GM10248 (cell line): ENCODE measurements at regions of chr3 and their contacts with region 1.

Region 1: GRCh38 chr3:184561061-184561912 is at the start of gene EPHB3:
- DNase-seq: peak; percentile 93
- CTCF ChIP-seq: peak; percentile 98

Region 2: DNA sequence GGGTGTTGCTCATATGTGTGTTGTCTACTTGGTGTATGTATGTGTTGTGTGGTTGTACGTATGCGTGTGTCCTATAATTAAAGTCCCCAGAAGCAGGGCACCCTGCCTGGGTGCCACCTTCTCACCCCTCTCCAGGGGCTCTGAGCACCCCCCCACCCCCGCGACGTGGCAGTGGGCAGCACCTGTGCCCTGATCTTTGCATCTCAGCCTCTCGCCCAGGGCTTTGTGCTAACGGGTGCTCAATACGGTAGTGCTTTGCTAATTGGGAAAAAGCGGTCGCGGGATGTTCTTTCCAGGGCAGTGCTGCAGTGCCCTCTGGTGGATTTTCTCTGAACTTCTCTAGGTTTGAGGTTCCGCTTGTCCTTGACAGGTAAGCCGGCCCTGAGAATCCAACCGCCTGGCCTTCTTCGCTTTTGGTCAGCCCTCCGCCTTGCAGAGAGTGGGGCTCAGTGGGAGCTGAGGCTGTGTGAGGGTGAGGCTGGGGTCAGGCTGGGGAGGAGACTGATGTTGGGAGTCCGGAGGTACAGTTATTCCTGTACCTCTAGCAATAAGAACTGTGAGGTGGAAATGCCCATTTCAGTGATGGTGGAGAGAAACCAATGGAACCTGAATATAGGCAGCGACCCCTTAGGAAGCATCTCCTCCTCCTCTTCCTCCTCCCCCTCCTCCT is 17.3 kb before region 1 on chr3:
- CTCF ChIA-PET with region 1: interaction called, 20 read pairs
- POLR2A ChIA-PET with region 1: no interaction called
- DNase-seq: peak; percentile 83
- CTCF ChIP-seq: peak; percentile 72

Region 3: GRCh38 chr3:184574515-184575417 is 13.5 kb after region 1 on chr3:
- CTCF ChIA-PET with region 1: interaction called, 22 read pairs
- POLR2A ChIA-PET with region 1: no interaction called
- DNase-seq: no peak
- CTCF ChIP-seq: no peak

Region 4: GRCh38 chr3:184777336-184778004 is 216.2 kb after region 1 on chr3:
- CTCF ChIA-PET with region 1: interaction called, 20 read pairs
- POLR2A ChIA-PET with region 1: no interaction called
- DNase-seq: peak; percentile 88
- CTCF ChIP-seq: peak; percentile 76

Region 5: GRCh38 chr3:184805351-184806038 is 244.2 kb after region 1 on chr3:
- CTCF ChIA-PET with region 1: interaction called, 12 read pairs
- POLR2A ChIA-PET with region 1: no interaction called
- DNase-seq: no peak
- CTCF ChIP-seq: no peak

Region 6: GRCh38 chr3:185176750-185177359 is 615.6 kb after region 1 on chr3:
- CTCF ChIA-PET with region 1: interaction called, 10 read pairs
- POLR2A ChIA-PET with region 1: no interaction called
- DNase-seq: peak; percentile 29
- CTCF ChIP-seq: peak; percentile 70